Tibial artery (tissue), 4 donors: ENCODE measurements at regions of chr12 and their contacts with region 1.

Region 1: GRCh38 chr12:120640840-120641833 is 711 bp downstream of the CABP1 start:
- DNase-seq: no peak
- H3K4me3 ChIP-seq: peak overlapping the region; percentile 34 to 49
- H3K27ac ChIP-seq: no peak overlapping the region
- H3K4me1 ChIP-seq: peaks cover 0 to 18% (median 15%) of the 10 kb centered on the region in 4 donors
- H3K27me3 ChIP-seq: peaks cover 0 to 77% of the 10 kb centered on the region in 2 donors
- CTCF ChIP-seq: no peak

Region 2: DNA sequence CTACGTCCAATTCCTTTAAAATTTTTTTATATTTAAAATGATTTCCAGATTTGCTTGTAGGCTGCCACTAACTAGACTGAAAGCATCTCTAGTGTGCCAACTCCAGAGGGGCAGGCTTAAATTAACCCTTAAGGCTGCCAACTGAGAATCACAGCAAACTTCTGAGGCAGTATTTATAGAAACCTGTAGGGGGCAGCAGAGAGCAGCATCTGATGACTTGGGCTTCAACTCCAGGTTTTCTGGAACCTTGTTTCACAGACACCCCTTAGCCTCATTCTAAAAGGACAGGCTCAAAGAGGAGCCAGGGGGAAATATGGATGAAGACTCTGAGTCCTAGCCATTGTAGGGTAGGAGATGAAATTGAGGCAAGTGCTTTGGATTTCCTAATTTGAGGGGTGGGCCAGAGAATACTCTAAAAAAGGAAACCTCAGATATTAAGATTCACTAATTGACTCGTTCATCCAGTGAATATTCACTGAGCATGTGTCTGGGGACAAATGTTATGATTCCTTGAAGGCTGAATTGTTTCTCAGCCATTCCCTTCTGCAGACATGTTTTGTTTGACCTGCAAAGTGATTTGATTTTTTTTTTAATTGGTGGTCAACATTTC is 1525.7 kb before region 1 on chr12:
- intact Hi-C with region 1: no loop called
- DNase-seq: no peak
- H3K4me3 ChIP-seq: no peak overlapping the region
- H3K27ac ChIP-seq: no peak overlapping the region
- H3K4me1 ChIP-seq: peaks cover 0 to 3% (median 0%) of the 10 kb centered on the region in 4 donors
- H3K27me3 ChIP-seq: peaks cover 0 to 16% of the 10 kb centered on the region in 2 donors
- CTCF ChIP-seq: peak; percentile 88 to 93

Region 3: DNA sequence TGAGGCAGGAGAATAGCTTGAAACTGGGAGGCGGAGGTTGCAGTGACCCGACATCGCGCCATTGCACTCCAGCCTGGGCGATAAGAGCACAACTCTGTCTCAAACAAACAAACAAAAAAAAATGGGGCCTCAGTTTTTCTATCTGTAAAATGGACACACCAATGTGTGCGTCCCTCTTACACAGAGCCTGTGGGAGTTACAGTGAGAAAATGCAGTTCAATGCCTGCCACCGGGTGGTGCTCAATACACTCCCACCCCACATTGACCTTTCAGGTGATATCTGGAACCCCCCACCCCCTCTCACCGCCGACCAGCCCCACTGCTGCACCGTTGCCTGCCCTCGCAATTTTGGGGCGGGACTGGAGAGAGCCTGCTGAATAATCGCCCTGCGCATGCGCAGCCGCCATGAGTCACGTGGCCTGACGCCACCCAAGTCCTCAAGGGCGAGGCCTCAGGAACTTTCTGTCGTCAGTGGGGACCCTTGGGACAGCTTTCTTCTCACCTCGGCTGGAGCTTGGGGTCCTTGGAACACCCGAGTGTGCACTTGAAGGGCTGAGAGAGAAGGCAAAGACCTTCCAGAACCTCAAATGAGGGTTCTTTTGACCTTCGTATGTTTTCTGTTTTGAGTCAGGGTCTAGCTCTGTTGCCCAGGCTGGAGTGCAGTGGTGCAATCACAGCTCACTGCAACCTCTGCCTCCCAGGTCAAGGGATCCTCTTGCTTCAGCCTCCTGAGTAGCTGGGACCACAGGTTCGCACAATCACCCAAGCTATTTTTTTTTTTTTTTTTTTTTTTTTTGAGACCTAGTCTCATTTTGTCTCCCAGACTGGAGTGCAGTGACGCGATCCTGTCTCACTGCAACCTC is 15.3 kb before region 1 on chr12:
- intact Hi-C with region 1: no loop called
- DNase-seq: no peak
- H3K4me3 ChIP-seq: no peak overlapping the region
- H3K27ac ChIP-seq: no peak overlapping the region
- H3K4me1 ChIP-seq: no peaks in the 10 kb centered on the region
- H3K27me3 ChIP-seq: peaks cover 0 to 9% of the 10 kb centered on the region in 2 donors
- CTCF ChIP-seq: no peak

Region 4: GRCh38 chr12:120820885-120821510 is 179.9 kb after region 1 on chr12:
- intact Hi-C with region 1: no loop called
- DNase-seq: no peak
- H3K4me3 ChIP-seq: no peak overlapping the region
- H3K27ac ChIP-seq: no peak overlapping the region
- H3K4me1 ChIP-seq: peaks cover 0 to 4% (median under 1%) of the 10 kb centered on the region in 4 donors
- H3K27me3 ChIP-seq: no peaks in the 10 kb centered on the region
- CTCF ChIP-seq: no peak

Region 5: DNA sequence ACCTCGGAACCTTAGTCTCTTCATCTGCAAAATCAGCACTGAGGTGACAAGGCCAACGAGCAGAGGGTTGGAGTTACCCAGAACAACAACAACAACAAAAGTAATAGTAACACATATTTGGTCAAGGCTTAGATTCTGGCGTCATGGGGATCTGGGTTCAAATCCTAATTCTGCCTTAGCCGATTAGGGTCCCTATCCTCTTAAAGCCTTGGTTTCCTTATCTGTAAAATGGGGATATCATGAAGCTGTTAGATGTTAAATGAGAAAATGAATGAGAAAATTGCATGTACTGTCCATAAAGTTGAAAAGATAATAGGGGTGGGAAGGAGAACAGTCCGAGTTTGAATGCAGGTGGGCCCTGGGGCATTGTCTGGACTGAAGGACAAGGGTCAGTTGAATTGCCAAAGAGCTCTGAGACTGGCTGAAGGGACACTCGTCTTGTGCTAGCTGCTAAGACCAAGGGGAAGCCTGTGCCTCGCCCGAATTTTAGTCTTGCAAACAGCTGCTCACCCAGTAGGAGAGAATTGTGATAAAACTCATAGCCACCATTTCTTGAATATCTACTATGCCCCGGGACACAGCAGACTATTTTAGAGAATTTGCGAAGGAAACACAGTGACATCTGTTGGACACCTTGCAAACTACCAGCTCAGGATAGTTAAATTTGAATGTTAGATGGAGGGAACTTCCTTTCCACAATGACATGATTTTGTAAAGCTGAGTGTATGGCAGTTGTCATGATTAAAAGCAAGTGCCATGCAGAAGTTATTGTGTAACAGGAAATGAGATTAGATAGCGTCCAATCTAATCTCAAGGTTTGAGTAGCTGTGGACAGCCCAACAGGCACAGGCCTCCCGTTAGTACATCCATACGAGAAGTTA is 330.4 kb after region 1 on chr12:
- intact Hi-C with region 1: loop called (anchors 10 kb)
- DNase-seq: no peak
- H3K4me3 ChIP-seq: no peak overlapping the region
- H3K27ac ChIP-seq: no peak overlapping the region
- H3K4me1 ChIP-seq: no peaks in the 10 kb centered on the region
- H3K27me3 ChIP-seq: peaks cover 0 to 3% of the 10 kb centered on the region in 2 donors
- CTCF ChIP-seq: peak; percentile 70 to 78